A673 (cell line): ENCODE measurements at regions of chr1 and their contacts with region 1.

Region 1: DNA sequence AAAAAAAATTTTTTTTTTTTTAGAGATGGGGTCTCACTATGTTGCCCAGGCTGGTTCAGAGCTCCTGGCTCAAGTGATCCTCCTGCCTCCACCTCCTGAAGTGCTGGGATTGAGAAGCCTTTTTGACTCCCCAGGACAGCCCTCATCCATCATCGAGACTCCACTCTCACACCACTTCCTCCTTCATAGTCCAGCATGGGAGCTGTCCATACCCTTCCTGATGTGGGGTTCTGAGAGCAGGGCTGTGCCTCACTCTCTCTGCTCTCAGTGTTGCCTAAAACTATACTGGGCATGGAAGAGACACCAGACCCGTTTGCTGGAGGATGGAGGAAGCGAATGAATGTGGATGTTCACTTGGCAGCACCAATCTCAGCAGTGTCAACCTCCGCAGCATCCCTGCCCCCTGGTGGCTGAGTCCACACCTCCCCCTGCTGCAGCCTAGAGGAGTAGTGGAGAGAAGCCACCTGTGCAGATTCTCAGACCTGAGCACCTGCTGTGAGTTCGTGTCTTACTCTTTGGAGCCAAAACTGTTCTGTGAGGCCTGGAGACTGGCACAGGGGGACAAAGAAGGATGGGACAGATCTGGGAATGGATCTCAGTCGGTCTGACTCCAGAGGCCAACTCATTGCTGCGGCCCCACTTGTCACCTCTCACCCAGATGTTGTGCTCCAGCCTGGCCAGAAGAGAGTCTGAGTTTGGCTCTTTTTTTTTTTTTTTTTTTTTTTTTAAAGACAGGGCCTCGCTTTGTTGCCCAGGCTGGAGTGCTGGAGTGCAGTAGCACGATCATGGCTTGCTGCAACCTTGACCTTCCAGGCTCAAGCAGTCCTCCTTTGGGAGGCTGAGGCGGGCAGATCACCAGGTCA is 17.7 kb downstream of the TINAGL1 start:
- DNase-seq: peak; percentile 83
- H3K4me3 ChIP-seq: no peak overlapping the region
- H3K27ac ChIP-seq: no peak overlapping the region
- H3K4me1 ChIP-seq: no peaks in the 10 kb centered on the region
- H3K27me3 ChIP-seq: no peaks in the 10 kb centered on the region
- CTCF ChIP-seq: peak; percentile 94

Region 2: DNA sequence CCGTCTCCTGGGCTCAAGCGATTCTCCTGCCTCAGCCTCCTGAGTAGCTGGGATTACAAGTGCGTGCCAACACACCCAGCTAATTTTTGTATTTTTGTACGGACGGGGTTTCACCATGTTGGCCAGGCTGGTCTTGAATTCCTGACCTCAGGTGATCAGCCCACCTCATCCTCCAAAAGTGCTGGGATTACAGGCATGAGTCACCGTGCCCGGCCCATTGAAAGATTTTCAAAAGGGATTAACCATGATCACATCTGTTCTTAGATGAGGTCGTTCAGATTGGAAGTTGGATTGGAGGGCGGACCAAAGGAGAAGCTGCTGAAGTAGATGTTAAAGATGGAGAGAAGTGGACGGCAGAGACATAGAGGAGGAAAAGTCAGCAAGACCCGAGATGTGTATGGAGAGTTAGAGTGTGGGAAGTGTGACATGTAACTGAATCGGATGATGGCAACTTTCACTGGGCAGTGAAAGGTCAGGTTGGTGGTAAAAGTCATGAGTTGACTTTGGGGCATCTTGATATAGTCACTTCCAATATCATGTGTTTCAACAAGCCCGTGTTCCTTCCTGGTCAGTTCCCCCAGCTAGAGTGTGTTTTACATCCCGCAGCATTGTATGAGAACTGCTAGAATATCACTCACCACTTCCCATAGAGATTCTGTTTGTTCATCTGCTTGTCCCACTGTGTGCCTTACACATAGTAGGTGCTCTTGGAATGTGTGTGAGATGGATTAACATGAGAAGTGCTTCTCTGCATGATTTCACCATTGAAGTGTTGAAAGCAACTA is 72.0 kb before region 1 on chr1:
- CTCF ChIA-PET with region 1: no interaction called
- POLR2A ChIA-PET with region 1: interaction called, 11 read pairs
- intact Hi-C with region 1: no loop called
- DNase-seq: no peak
- H3K4me3 ChIP-seq: no peak overlapping the region
- H3K27ac ChIP-seq: no peak overlapping the region
- H3K4me1 ChIP-seq: no peaks in the 10 kb centered on the region
- H3K27me3 ChIP-seq: no peaks in the 10 kb centered on the region
- CTCF ChIP-seq: no peak

Region 3: DNA sequence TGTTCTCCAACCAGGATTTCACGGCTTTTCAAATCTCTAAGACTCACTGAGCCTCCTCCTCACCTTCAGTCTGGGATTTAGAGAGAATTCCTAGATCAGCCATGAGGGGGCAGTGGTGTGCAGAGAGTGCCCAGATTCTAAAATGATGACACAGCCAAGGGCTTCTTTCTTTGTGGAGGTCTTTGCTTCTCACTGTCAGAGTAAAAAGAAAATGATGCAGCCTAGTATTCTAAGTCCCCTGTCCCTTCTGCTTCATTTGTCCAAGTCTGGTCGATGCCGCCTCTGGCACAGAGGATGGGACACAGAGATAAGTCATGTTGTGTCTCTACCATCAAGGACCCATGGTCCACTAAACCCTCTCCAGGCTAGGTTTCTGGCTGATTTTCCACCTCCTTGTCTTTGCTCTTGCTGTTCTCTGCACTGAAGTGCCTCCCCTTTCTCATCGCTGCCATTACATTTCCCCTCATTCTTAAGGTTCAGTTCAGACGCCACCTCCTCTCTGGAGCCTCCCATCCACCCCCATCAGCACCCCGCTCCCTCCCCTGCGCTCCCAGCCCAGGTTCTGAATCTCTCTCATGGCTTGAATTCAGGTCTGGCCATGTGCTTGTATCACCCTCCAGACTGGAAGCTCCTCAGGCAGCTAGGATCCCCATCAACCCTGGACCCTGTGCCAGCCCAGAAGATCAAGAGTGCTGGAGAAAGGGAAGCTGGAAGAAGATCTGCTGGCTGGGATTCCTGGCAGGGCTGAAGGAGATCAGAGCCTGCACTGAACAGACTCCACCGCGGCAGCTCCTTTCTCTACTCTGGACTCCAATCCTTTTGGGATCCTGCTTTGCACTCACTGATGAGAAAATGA is 29.6 kb before region 1 on chr1:
- CTCF ChIA-PET with region 1: no interaction called
- POLR2A ChIA-PET with region 1: no interaction called
- intact Hi-C with region 1: loop called (anchors 2 kb)
- DNase-seq: peak; percentile 77
- H3K4me3 ChIP-seq: no peak overlapping the region
- H3K27ac ChIP-seq: no peak overlapping the region
- H3K4me1 ChIP-seq: no peaks in the 10 kb centered on the region
- H3K27me3 ChIP-seq: no peaks in the 10 kb centered on the region
- CTCF ChIP-seq: peak; percentile 87